ENCODE measurements at regions of chr9 and their contacts with region 1.

Region 1: GRCh38 chr9:127707726-127708147 is 949 bp downstream of the CFAP157 start:
- DNase-seq: peak; percentile 63
- H3K4me3 Mint-ChIP-seq: no peak overlapping the region
- H3K27ac Mint-ChIP-seq: no peak overlapping the region
- H3K4me1 Mint-ChIP-seq: peaks cover 22% of the 10 kb centered on the region
- H3K27me3 Mint-ChIP-seq: no peaks in the 10 kb centered on the region

Region 2: DNA sequence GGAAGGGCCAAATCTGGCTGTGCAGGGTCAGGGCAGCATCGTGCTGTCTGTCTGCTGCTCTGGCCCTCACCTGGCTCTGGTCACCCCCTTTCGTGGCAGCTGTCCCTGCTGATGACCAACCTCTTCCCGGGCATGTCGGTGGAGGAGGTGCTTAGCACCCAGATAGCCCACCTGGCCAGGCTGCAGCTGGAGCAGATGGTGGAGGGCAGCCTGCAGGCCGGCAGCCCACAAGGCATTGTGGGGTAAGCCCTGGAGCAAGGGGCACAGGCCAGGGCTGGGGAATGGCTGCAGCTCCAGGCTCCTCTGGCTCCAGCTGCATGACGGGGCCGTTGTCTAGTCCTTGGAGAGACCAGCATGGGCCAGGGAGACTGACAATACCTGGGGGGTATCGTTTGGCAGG is 19.1 kb after region 1 on chr9:
- CTCF ChIA-PET with region 1: no interaction called
- POLR2A ChIA-PET with region 1: interaction called, 3 read pairs
- intact Hi-C with region 1: loop called (anchors 2 kb)
- DNase-seq: no peak
- H3K4me3 Mint-ChIP-seq: no peak overlapping the region
- H3K27ac Mint-ChIP-seq: no peak overlapping the region
- H3K4me1 Mint-ChIP-seq: no peaks in the 10 kb centered on the region
- H3K27me3 Mint-ChIP-seq: no peaks in the 10 kb centered on the region

Region 3: DNA sequence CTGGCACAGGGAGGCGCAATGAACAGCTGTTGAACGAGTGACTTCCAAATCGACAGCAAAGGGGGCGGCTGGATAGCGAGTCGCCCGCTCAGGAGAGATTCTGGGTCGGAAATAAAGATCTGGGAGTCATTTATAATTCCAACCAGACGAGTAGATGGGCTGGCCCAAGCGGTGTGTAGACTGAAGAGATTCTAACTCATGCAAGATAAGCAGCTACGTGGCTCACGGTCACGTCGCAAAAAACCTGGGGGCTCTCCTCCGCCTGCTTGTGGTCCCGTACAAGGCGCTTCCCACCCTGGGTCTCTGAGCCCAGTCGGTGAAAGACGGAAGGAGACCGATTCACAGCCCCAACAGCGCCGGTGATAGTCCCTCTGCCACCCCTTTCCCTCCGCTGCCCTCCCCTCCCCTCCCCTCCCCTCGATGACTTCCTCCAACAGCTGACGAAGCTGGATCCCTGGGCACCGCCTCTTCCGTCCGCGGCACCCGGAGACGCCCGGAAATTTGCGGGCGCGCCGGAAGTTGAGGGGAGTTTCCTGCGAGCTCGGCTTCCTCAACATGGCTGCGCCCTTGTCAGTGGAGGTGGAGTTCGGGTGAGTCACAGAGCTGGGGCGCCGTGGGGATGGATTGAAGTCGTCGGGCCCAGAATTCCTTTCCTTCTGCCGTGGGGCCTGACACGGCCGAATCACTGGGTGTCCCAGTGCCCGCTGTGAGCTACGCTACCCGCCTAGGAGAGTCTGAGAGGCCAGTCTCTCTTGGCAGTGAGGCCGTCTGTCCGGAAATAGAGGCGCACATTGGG is 663.3 kb after region 1 on chr9 and contains the start of gene URM1:
- CTCF ChIA-PET with region 1: no interaction called
- POLR2A ChIA-PET with region 1: no interaction called
- intact Hi-C with region 1: no loop called
- DNase-seq: peak; percentile 98
- H3K4me3 Mint-ChIP-seq: peak within 1 kb of the TSS; percentile 99
- H3K27ac Mint-ChIP-seq: peak within 1 kb of the TSS; percentile 93
- H3K4me1 Mint-ChIP-seq: peaks cover 27% of the 10 kb centered on the region
- H3K27me3 Mint-ChIP-seq: no peaks in the 10 kb centered on the region
- total RNA-seq, gene URM1: 45.9 to 50.0 TPM